ENCODE measurements at regions of chr16 and their contacts with region 1.

Region 1: GRCh38 chr16:71883849-71884638 is at the start of gene ZNF821:
- DNase-seq: peak; percentile 61 to 74
- ATAC-seq: peak; percentile 80 to 84
- H3K4me3 ChIP-seq: peak within 1 kb of the TSS; percentile 72 to 93 (median 90)
- H3K27ac ChIP-seq: peak within 1 kb of the TSS; percentile 90 to 96 (median 92)
- H3K4me1 ChIP-seq: peaks cover 7 to 8% of the 10 kb centered on the region in 2 donors
- H3K27me3 ChIP-seq: no peaks in the 10 kb centered on the region
- CTCF ChIP-seq: peak; percentile 40 to 52 (median 51)
- POLR2A ChIP-seq: peak; percentile 45 to 53
- total RNA-seq, gene ZNF821: 4.0 to 19.4 (median 8.1) TPM

Region 2: GRCh38 chr16:71723537-71724319 is 160.3 kb before region 1 on chr16:
- in situ Hi-C with region 1: no loop called
- intact Hi-C with region 1: loop called (anchors 5 kb)
- DNase-seq: peak; percentile 42 to 74
- ATAC-seq: peak; percentile 86 to 90
- H3K4me3 ChIP-seq: peak overlapping the region; percentile 66 to 89 (median 86)
- H3K27ac ChIP-seq: peak overlapping the region; percentile 79 to 85 (median 84)
- H3K4me1 ChIP-seq: peaks cover 11 to 27% of the 10 kb centered on the region in 2 donors
- H3K27me3 ChIP-seq: no peaks in the 10 kb centered on the region
- CTCF ChIP-seq: peak in 3 of 5 experiments; percentile 12 to 17 (median 14)
- POLR2A ChIP-seq: peak; percentile 63 to 70

Region 3: GRCh38 chr16:71845639-71846430 is 38.2 kb before region 1 on chr16 and contains the start of gene ATXN1L:
- in situ Hi-C with region 1: no loop called
- intact Hi-C with region 1: loop called (anchors 5 kb)
- DNase-seq: peak; percentile 74 to 90
- ATAC-seq: peak; percentile 88 to 90
- H3K4me3 ChIP-seq: peak within 1 kb of the TSS; percentile 83 to 100 (median 94)
- H3K27ac ChIP-seq: peak within 1 kb of the TSS; percentile 87 to 93 (median 88)
- H3K4me1 ChIP-seq: peaks cover 22 to 25% of the 10 kb centered on the region in 2 donors
- H3K27me3 ChIP-seq: no peaks in the 10 kb centered on the region
- CTCF ChIP-seq: peak in 1 of 5 experiments; percentile 33
- POLR2A ChIP-seq: peak; percentile 78 to 85
- total RNA-seq, gene ATXN1L: 15.8 to 22.6 (median 19.4) TPM

Region 4: GRCh38 chr16:71961066-71962039 is 77.3 kb after region 1 on chr16:
- in situ Hi-C with region 1: no loop called
- intact Hi-C with region 1: loop called (anchors 2 kb)
- DNase-seq: peak; percentile 59 to 77
- ATAC-seq: peak; percentile 95 to 99
- H3K4me3 ChIP-seq: no peak overlapping the region
- H3K27ac ChIP-seq: no peak overlapping the region
- H3K4me1 ChIP-seq: no peaks in the 10 kb centered on the region
- H3K27me3 ChIP-seq: no peaks in the 10 kb centered on the region
- CTCF ChIP-seq: peak; percentile 72 to 84 (median 73)
- POLR2A ChIP-seq: no peak

Region 5: GRCh38 chr16:71995038-71995437 is 111.0 kb after region 1 on chr16:
- in situ Hi-C with region 1: no loop called
- intact Hi-C with region 1: no loop called
- DNase-seq: no peak
- ATAC-seq: no peak
- H3K4me3 ChIP-seq: no peak overlapping the region
- H3K27ac ChIP-seq: no peak overlapping the region
- H3K4me1 ChIP-seq: no peaks in the 10 kb centered on the region
- H3K27me3 ChIP-seq: no peaks in the 10 kb centered on the region
- CTCF ChIP-seq: no peak
- POLR2A ChIP-seq: no peak

Measured in gastrocnemius medialis (tissue), 4 donors.